Activated CD8-positive, alpha-beta memory T cell treated with anti-CD3 and anti-CD28 coated beads, Interleukin-2, amount 10 ng/mL, durations not matched to agents 7 days and 5 days (primary cell): ENCODE measurements at regions of chr1 and their contacts with region 1.

Region 1: GRCh38 chr1:67760030-67760821 is 73.0 kb downstream of the GNG12 start:
- DNase-seq: peak; percentile 63
- ATAC-seq: peak; percentile 66
- H3K4me3 Mint-ChIP-seq: no peak overlapping the region
- H3K27ac Mint-ChIP-seq: no peak overlapping the region
- H3K4me1 Mint-ChIP-seq: no peaks in the 10 kb centered on the region
- H3K27me3 Mint-ChIP-seq: peaks cover 30% of the 10 kb centered on the region

Region 2: DNA sequence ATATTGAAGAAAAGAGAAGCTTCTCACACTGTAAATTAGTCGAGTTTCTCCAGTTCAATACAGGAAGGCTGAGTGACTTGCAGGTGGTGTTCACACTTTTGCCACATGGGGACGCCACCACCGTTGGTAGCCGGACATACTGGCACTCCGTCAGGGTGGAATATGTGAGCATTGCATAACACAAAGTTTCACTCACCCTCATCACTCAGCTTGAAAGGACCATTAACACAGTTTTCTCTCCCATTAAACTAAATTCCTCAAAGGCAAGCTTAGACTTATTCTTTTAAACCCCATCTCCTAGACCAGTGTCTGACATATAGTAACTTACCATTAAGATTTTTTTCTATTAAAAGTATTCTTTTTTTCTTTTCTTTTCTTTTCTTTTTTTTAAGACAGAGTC is 224.8 kb before region 1 on chr1:
- CTCF ChIA-PET with region 1: interaction called, 31 read pairs
- DNase-seq: peak; percentile 66
- ATAC-seq: no peak
- H3K4me3 Mint-ChIP-seq: no peak overlapping the region
- H3K27ac Mint-ChIP-seq: no peak overlapping the region
- H3K4me1 Mint-ChIP-seq: no peaks in the 10 kb centered on the region
- H3K27me3 Mint-ChIP-seq: peaks cover 5% of the 10 kb centered on the region

Region 3: GRCh38 chr1:67561704-67562113 is 198.5 kb before region 1 on chr1:
- CTCF ChIA-PET with region 1: interaction called, 84 read pairs
- DNase-seq: peak; percentile 87
- ATAC-seq: peak; percentile 90
- H3K4me3 Mint-ChIP-seq: no peak overlapping the region
- H3K27ac Mint-ChIP-seq: no peak overlapping the region
- H3K4me1 Mint-ChIP-seq: peaks cover 4% of the 10 kb centered on the region
- H3K27me3 Mint-ChIP-seq: peaks cover 5% of the 10 kb centered on the region

Region 4: GRCh38 chr1:67570473-67571143 is 189.6 kb before region 1 on chr1:
- CTCF ChIA-PET with region 1: interaction called, 10 read pairs
- DNase-seq: no peak
- ATAC-seq: no peak
- H3K4me3 Mint-ChIP-seq: no peak overlapping the region
- H3K27ac Mint-ChIP-seq: no peak overlapping the region
- H3K4me1 Mint-ChIP-seq: no peaks in the 10 kb centered on the region
- H3K27me3 Mint-ChIP-seq: peaks cover 3% of the 10 kb centered on the region

Region 5: GRCh38 chr1:67685067-67685557 is 75.1 kb before region 1 on chr1 and contains the start of gene GADD45A:
- CTCF ChIA-PET with region 1: interaction called, 19 read pairs
- DNase-seq: peak; percentile 99
- ATAC-seq: peak; percentile 92
- H3K4me3 Mint-ChIP-seq: peak within 1 kb of the TSS; percentile 96
- H3K27ac Mint-ChIP-seq: peak within 1 kb of the TSS; percentile 99
- H3K4me1 Mint-ChIP-seq: peaks cover 38% of the 10 kb centered on the region
- H3K27me3 Mint-ChIP-seq: no peaks in the 10 kb centered on the region
- total RNA-seq, gene GADD45A: 30.2 to 33.7 TPM

Region 6: DNA sequence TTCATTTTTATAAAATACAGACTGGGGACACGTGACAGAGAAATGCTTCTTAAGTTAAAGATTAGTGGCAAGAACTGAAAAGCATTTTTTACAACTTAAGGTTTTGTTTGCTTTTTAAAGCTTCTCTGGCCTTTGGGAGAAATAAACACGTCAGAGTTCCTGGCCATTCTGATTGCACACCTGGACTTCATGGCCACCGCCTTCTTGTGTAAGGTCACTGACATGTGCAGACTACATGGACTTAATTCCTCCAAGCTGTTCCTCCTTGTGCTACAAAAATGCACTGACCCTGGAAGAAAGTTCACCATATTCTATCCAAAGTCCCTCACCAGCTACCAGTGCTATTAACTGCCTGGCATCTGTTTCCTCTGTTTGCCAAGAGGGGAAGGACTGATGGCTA is 19.1 kb before region 1 on chr1:
- CTCF ChIA-PET with region 1: interaction called, 13 read pairs
- DNase-seq: no peak
- ATAC-seq: no peak
- H3K4me3 Mint-ChIP-seq: no peak overlapping the region
- H3K27ac Mint-ChIP-seq: no peak overlapping the region
- H3K4me1 Mint-ChIP-seq: peaks cover 7% of the 10 kb centered on the region
- H3K27me3 Mint-ChIP-seq: peaks cover 17% of the 10 kb centered on the region